Panc1 (cell line): ENCODE measurements at regions of chr1 and their contacts with region 1.

Region 1: DNA sequence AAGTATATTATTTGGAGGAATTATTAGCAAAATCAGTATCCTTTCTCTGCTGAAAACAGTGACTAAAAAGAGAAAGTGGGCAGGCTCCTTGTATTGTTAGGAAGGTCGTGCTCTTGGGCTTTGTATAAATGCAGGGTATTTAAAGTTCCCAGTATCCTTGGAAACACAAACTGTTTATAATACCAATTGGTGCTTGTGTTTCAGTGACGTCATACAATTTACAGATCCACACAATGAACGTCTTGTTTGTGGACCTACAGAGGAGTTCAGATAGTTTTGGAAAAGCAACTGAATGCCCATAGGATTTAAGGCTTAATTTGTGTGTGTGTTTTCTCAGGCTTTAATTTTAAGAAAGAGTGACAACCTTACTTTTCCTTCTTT is 168.2 kb downstream of the RASAL2 start:
- DNase-seq: no peak
- ATAC-seq: peak; percentile 56; the same call in 1 of the 2 replicates
- H3K4me3 ChIP-seq: peak overlapping the region in 1 of 2 experiments; percentile 7; a peak in 1 of 4 replicates
- H3K27ac ChIP-seq: peak overlapping the region; percentile 35
- H3K4me1 ChIP-seq: peaks cover 23% of the 10 kb centered on the region
- H3K27me3 ChIP-seq: no peaks in the 10 kb centered on the region
- CTCF ChIP-seq: no peak

Region 2: DNA sequence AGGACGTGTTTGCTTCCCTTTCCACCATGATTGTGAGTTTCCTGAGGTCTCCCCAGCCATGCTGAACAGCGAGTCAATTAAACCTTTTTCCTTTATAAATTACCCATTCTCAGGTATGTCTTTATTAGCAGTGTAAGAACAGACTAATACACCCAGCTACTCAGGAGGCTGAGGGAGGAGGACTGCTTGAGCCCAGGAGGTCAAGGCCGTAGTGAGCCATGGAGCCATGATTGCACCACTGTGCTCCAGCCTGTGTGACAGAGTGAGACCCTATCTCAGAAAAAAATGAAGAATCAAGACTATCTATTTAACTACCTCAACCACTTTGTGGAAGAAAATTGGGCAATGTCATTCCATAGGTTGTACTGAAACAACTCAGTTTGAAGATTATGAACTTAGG is 237.6 kb before region 1 on chr1:
- CTCF ChIA-PET with region 1: interaction called, 11 read pairs
- POLR2A ChIA-PET with region 1: no interaction called
- in situ Hi-C with region 1: no loop called
- intact Hi-C with region 1: no loop called
- DNase-seq: no peak
- ATAC-seq: no peak
- H3K4me3 ChIP-seq: no peak overlapping the region
- H3K27ac ChIP-seq: no peak overlapping the region
- H3K4me1 ChIP-seq: no peaks in the 10 kb centered on the region
- H3K27me3 ChIP-seq: no peaks in the 10 kb centered on the region
- CTCF ChIP-seq: no peak

Region 3: GRCh38 chr1:178093205-178093957 is 168.7 kb before region 1 on chr1:
- CTCF ChIA-PET with region 1: no interaction called
- POLR2A ChIA-PET with region 1: no interaction called
- in situ Hi-C with region 1: no loop called
- intact Hi-C with region 1: loop called (anchors 10 kb)
- DNase-seq: peak; percentile 83
- ATAC-seq: peak; percentile 92
- H3K4me3 ChIP-seq: peak overlapping the region; percentile 80 to 94
- H3K27ac ChIP-seq: peak overlapping the region; percentile 91
- H3K4me1 ChIP-seq: peaks cover 31% of the 10 kb centered on the region
- H3K27me3 ChIP-seq: no peaks in the 10 kb centered on the region
- CTCF ChIP-seq: no peak

Region 4: DNA sequence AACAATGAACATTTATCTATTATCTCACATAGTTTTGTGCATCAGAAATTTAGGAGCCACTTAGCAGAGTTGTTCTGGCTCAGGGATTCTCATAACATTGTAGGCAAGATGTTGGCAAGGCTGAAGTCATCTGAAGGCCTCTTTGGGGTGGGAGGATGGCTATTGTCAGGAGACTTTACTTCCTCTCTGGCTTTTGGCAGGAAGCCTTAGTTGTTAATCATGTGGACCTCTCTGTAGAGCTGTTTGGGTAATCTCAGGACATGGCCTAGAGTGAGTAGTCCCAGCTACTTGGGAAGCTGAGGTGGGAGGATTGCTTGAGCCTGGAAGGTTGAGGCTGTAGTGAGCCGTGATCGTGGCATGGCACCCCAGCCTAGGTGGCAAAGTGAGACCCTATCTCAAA is 128.0 kb before region 1 on chr1:
- CTCF ChIA-PET with region 1: no interaction called
- POLR2A ChIA-PET with region 1: no interaction called
- in situ Hi-C with region 1: no loop called
- intact Hi-C with region 1: no loop called
- DNase-seq: no peak
- ATAC-seq: peak; percentile 56; the same call in 1 of the 2 replicates
- H3K4me3 ChIP-seq: no peak overlapping the region
- H3K27ac ChIP-seq: no peak overlapping the region
- H3K4me1 ChIP-seq: no peaks in the 10 kb centered on the region; the same call in 1 of the 2 replicates
- H3K27me3 ChIP-seq: no peaks in the 10 kb centered on the region
- CTCF ChIP-seq: no peak

Region 5: DNA sequence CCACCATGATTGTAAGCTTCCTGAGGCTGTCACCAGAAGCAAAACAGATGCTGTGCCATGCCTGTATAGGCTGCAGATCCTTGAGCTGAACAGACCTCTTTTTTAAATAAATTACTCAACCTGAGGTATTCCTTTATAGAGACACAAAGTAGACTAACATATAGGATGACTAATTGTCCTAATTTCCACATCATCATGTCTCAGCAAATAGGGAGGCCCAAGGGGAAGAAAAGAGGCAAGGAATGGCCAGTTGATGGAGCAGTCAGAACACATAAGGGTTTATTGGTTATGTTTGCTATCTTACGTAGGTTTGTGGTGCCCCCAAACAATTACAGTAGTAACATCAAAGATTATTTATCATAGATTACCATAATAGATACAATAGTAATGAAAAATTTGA is 42.0 kb before region 1 on chr1:
- CTCF ChIA-PET with region 1: no interaction called
- POLR2A ChIA-PET with region 1: no interaction called
- in situ Hi-C with region 1: no loop called
- intact Hi-C with region 1: loop called (anchors 1 kb)
- DNase-seq: no peak
- ATAC-seq: no peak
- H3K4me3 ChIP-seq: no peak overlapping the region
- H3K27ac ChIP-seq: no peak overlapping the region
- H3K4me1 ChIP-seq: no peaks in the 10 kb centered on the region; the same call in 1 of the 2 replicates
- H3K27me3 ChIP-seq: no peaks in the 10 kb centered on the region
- CTCF ChIP-seq: no peak